Activated T-helper 2 cell treated with anti-CD3 and anti-CD28 coated beads, Interferon-gamma antibody, Interleukin-2, Interleukin-4, amounts not matched to agents 10 μg/mL and 5 μg/mL and 100 μg/mL, durations not matched to agents 14 hours and 24 hours and 36 hours (primary cell): ENCODE measurements at regions of chr7 and their contacts with region 1.

Region 1: DNA sequence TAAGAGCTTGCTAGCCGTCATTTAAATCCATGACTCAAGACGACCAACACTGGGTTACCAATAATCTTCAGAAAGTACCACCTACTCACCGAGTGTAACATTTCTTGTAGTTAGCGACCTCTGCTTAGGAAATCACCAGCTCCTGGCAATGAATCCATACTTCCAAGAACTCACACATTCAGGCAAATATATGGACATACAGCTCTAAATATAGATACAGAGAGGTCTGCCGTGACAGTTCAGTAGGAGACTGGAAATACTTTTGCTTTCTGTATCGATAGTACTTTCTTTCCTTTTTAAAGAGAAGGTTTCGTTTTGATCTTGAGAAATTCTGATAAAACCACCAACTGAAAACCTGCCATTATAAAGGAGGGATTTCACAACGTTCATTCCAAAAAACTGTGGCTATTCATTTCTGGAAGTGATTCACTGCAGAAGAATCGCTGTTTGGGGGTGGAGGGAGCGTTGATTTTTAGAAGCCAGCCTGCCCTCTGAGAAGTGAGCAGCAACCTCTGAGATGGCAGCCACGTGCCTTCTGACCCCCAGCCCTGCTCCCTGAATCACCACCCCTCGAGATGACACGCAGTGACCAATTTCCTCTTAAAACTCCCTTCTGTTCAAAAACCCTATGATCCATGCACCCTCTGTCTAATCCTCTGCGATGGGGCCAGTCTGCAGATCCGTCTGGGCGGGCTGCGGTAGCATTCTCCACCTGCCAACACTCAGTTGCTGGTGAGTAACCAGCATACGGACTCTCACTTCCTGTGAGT is 179.0 kb upstream of the KLF14 start:
- DNase-seq: peak; percentile 80
- H3K4me3 Mint-ChIP-seq: peak overlapping the region; percentile 86
- H3K27ac Mint-ChIP-seq: peak overlapping the region; percentile 86
- H3K4me1 Mint-ChIP-seq: peaks cover 78% of the 10 kb centered on the region
- H3K27me3 Mint-ChIP-seq: no peaks in the 10 kb centered on the region

Region 2: DNA sequence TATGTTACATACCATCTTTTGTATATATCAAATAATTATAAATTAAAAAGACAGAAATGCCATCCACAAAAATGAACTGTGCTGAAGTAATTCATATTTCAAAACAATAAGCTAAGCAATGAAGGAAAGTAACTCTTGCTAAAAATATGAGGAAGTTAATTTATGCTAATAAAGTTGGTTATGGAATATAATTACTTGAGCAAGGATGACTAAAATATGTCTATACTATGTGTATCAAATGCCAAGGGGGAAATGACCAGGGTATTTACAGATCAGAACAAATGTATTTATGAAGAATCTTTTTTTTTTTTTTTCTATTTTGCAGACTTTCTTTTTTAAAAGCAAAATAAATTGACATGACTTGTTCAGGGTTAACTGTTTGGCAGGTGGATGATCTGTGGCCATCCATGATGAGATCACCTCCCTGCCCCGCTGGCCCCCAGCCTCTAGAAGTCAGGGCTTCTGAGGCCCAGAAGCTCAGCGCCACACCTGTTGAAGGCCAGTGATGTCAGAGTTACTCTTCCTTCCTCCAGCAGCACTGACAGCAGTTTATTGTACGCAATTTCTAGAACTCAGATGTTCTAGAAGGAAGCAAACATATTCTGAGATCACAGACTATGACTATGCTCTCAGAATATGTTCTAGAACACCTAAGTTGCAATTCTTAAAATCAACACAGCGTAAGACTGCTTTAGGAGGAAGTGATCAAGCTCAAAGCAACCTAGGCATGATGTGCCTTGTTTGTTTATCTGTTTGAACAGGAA is 17.0 kb after region 1 on chr7:
- intact Hi-C with region 1: loop called (anchors 1 kb)
- DNase-seq: no peak
- H3K4me3 Mint-ChIP-seq: no peak overlapping the region
- H3K27ac Mint-ChIP-seq: peak overlapping the region; percentile 77
- H3K4me1 Mint-ChIP-seq: peaks cover 71% of the 10 kb centered on the region
- H3K27me3 Mint-ChIP-seq: no peaks in the 10 kb centered on the region

Region 3: DNA sequence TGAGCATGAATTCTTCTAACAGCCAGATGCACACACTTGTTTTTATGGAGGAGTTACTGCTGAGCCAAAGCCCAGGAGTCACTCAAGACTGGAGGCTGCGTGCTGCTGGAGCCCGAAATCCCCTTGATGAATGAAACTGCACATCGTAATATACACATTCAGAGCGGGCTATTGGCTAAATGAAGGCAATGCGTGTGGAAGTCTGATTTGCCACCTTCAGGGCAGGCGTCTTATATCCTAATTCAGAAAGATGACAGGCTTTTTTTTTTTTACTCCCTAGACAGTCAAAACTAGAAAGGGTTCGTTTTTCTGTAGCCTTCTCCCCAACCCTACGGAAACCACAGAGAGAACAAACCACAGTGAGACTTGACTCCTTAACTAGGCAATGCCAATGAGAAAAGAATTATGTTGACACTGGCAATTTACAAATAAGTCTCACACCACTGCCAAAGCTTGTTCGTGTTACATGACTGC is 48.1 kb after region 1 on chr7:
- intact Hi-C with region 1: loop called (anchors 1 kb)
- DNase-seq: peak; percentile 85
- H3K4me3 Mint-ChIP-seq: peak overlapping the region; percentile 95
- H3K27ac Mint-ChIP-seq: peak overlapping the region; percentile 98
- H3K4me1 Mint-ChIP-seq: peaks cover 34% of the 10 kb centered on the region
- H3K27me3 Mint-ChIP-seq: no peaks in the 10 kb centered on the region

Region 4: DNA sequence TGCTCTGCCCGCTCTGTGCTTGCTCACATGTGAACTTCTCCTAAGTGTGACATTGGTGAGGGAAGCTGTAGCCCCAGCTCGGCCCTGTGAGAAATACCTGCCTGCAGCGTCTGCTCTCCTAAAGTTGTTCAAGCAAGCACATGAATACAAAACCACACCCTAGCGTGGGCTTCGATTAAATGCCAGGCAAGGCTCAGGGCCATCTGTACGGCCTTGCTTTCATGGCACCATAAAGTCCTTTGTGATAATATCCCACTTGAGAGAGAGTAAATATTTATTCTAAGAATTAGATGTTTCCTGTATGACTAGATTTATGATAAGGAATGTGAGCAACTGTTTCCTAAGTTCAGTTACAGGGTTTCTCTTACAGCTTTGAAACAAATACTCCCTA is 83.8 kb after region 1 on chr7:
- intact Hi-C with region 1: loop called (anchors 1 kb)
- DNase-seq: no peak
- H3K4me3 Mint-ChIP-seq: peak overlapping the region; percentile 66
- H3K27ac Mint-ChIP-seq: peak overlapping the region; percentile 90
- H3K4me1 Mint-ChIP-seq: peaks cover 66% of the 10 kb centered on the region
- H3K27me3 Mint-ChIP-seq: no peaks in the 10 kb centered on the region

Region 5: DNA sequence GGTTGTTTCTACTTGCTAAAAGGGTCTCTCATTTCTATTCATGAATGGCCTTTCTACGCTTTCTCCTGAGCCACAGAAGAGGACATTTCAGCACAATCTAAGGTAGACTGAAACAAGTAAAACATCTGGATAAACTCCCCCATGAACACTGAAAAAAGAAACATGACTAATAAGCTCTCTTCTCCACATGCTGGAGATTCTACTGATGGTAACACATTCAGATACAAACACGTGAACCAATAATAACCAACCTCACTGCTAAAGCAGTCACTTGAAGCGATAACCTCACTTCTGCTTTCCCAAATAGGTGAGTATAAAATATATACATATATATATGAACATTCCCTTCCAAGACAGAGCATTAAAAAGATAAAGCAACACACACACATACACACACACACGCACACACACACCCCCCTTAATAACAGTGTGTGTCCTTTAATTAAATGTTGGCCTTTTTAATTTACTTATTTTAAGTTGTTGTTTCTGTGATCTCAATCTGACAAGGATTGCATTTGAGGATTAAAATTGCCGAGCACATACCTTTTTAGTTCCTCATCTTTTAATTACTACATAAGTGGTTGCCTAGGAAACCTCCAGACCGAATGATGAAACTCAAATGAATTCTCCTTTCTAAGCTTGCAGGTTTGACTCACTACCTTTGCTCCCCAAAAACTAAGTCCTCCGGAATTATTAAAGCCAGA is 113.4 kb after region 1 on chr7:
- intact Hi-C with region 1: loop called (anchors 1 kb)
- DNase-seq: no peak
- H3K4me3 Mint-ChIP-seq: no peak overlapping the region
- H3K27ac Mint-ChIP-seq: peak overlapping the region; percentile 84
- H3K4me1 Mint-ChIP-seq: peaks cover 64% of the 10 kb centered on the region
- H3K27me3 Mint-ChIP-seq: no peaks in the 10 kb centered on the region

Region 6: GRCh38 chr7:131188367-131189339 is 275.6 kb after region 1 on chr7:
- intact Hi-C with region 1: loop called (anchors 5 kb)
- DNase-seq: peak; percentile 56
- H3K4me3 Mint-ChIP-seq: peak overlapping the region; percentile 42
- H3K27ac Mint-ChIP-seq: peak overlapping the region; percentile 89
- H3K4me1 Mint-ChIP-seq: peaks cover 59% of the 10 kb centered on the region
- H3K27me3 Mint-ChIP-seq: no peaks in the 10 kb centered on the region